ENCODE measurements at regions of chr22 and their contacts with region 1.

Region 1: DNA sequence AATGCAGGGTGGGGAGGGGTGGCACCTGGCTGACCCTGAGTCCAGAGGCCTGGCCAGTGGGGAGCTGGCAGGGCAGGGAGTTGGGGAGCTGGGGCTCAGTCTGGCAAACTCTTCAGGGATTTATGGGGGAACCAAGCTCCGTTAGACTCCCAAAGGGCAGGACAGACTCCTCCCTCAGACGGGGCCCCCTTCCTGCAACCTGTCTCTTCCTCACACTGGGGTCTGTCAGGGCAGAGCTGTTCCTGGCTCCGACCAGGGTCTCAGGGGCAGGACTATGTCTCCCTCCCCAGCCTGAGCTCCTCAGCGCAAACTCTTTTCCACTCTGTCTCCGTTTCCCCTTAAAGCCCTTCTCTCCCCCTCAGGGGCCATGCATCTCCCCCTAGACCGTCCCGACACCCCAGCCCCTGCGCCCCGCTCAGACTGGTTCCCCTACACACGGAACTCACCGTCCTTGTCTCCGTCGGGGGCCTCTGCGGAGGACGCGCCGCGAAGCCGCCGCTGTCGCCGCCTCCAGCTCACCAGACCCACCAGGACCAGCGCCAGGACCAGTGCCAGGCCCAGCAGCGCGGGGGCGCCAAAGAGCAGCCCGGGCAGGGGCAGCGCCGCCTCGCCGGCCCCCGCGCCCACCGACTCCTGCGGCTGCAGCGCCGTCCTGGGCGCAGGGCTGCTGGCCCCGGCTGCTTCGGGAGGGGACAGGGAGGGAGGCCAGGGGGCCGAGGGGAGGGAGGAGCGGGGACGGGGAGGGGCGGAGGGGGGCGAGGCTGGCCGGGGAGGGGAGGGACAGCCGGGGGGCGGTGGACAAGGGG is 748 bp downstream of the TNFRSF13C start:
- DNase-seq: peak; percentile 75
- H3K4me3 Mint-ChIP-seq: peak overlapping the region; percentile 53
- H3K27ac Mint-ChIP-seq: no peak overlapping the region
- H3K4me1 Mint-ChIP-seq: peaks cover 11% of the 10 kb centered on the region
- H3K27me3 Mint-ChIP-seq: peaks cover 24% of the 10 kb centered on the region

Region 2: DNA sequence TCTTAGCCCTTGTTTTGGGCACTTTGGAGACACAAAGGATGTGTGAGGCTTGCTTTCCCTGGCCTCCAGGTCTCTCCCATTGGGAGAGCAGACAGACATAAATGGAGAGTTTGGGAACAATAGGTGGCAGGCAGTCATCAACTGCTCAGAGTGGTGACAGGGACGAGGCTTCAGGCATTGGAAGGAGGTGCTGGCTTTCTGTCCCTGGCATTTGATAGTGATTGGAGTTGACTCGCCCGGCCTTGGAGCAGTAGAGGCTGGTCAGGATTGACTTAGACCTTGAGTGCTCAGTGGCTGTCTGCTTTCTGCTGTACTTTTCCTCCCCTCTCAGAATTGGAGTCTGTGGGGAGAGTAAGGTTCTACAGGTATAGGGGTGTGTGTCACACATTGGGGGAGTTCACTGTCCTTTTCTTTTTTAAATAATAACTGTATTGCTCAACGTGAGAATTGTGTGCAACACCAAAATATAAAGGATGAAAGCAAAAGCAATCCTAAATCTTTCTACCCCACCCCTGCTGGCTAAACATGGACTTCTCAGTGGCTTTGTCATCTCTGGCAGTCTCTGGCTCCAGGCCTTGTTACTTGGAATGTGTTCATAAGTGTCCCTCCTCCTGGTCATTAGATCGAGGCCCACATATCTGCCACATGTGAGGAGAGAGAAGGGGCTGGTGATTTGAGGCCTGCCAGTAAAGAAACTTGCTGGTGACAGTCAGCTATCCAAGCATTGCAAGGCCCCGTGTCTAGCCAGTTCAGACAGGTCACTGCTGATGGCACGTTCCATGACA is 32.1 kb before region 1 on chr22:
- CTCF ChIA-PET with region 1: interaction called, 11 read pairs
- POLR2A ChIA-PET with region 1: no interaction called
- DNase-seq: no peak
- H3K4me3 Mint-ChIP-seq: no peak overlapping the region
- H3K27ac Mint-ChIP-seq: no peak overlapping the region
- H3K4me1 Mint-ChIP-seq: peaks cover 2% of the 10 kb centered on the region
- H3K27me3 Mint-ChIP-seq: no peaks in the 10 kb centered on the region

Region 3: GRCh38 chr22:41908411-41909309 is 17.2 kb before region 1 on chr22:
- CTCF ChIA-PET with region 1: interaction called, 16 read pairs
- POLR2A ChIA-PET with region 1: no interaction called
- DNase-seq: peak; percentile 46
- H3K4me3 Mint-ChIP-seq: no peak overlapping the region
- H3K27ac Mint-ChIP-seq: no peak overlapping the region
- H3K4me1 Mint-ChIP-seq: peaks cover 29% of the 10 kb centered on the region
- H3K27me3 Mint-ChIP-seq: peaks cover 31% of the 10 kb centered on the region

Region 4: GRCh38 chr22:41915035-41915785 is 10.6 kb before region 1 on chr22 and contains the start of gene SHISA8:
- CTCF ChIA-PET with region 1: interaction called, 15 read pairs
- POLR2A ChIA-PET with region 1: no interaction called
- DNase-seq: peak; percentile 57
- H3K4me3 Mint-ChIP-seq: peak within 1 kb of the TSS; percentile 20
- H3K27ac Mint-ChIP-seq: no peak within 1 kb of the TSS
- H3K4me1 Mint-ChIP-seq: peaks cover 27% of the 10 kb centered on the region
- H3K27me3 Mint-ChIP-seq: peaks cover 56% of the 10 kb centered on the region
- total RNA-seq, gene SHISA8: not detected